Ovary (tissue), 10 donors: ENCODE measurements at regions of chr9 and their contacts with region 1.

Region 1: DNA sequence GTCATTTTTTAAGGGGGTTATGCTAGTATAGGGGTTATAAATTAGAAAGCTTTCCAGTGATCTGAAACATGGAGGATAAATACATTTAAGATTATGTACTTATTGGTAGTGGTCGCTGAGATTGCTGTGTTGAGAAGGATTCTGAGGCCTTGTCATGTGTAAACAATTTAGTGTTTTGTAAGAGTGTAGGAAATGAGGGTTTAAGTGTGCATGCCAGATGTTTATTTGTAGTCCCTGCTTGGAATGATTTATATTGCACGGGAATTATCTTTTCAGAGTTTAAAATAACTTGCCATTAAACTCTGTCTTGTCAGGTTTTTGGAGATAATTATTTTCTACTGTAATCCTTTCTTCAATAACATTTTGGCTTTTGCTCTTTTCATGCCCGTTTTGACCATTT is 19.4 kb downstream of the ZNF618 start:
- DNase-seq: no peak
- H3K4me3 ChIP-seq: no peak overlapping the region
- H3K27ac ChIP-seq: no peak overlapping the region
- H3K4me1 ChIP-seq: no peaks in the 10 kb centered on the region
- H3K27me3 ChIP-seq: no peaks in the 10 kb centered on the region
- CTCF ChIP-seq: no peak
- EP300 ChIP-seq: no peak
- POLR2A ChIP-seq: no peak

Region 2: DNA sequence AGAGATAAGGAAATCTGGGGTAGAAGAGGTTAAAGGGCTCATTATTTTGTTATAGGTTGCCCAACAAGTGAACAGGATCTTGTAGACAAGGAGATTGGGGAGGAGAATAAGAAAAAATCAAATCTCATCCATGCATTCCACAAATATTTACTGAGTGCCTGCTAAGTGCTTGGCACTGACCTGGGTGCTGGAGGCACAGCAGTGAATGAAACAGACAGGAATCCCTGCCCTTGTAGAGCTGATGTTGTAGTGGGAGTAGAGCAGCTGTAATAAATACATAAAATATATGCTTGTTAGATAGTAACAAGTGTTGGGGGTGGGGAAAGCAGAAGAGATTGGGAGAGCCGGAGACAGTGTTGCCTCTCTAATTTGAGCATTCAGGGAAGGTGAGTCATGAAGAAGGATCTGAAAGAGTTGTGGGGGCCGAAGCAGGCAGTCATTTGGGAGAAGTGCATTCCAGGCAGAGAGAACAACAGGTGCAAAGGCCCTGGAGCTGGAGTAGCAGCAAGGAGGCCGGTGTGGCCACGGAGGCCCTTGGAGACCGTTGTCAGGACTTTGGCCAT is 78.4 kb after region 1 on chr9:
- intact Hi-C with region 1: loop called in 1 of 4 experiments (anchors 10 kb)
- DNase-seq: no peak
- H3K4me3 ChIP-seq: no peak overlapping the region
- H3K27ac ChIP-seq: no peak overlapping the region
- H3K4me1 ChIP-seq: peaks cover 15% of the 10 kb centered on the region
- H3K27me3 ChIP-seq: no peaks in the 10 kb centered on the region
- CTCF ChIP-seq: no peak
- EP300 ChIP-seq: no peak
- POLR2A ChIP-seq: no peak

Region 3: DNA sequence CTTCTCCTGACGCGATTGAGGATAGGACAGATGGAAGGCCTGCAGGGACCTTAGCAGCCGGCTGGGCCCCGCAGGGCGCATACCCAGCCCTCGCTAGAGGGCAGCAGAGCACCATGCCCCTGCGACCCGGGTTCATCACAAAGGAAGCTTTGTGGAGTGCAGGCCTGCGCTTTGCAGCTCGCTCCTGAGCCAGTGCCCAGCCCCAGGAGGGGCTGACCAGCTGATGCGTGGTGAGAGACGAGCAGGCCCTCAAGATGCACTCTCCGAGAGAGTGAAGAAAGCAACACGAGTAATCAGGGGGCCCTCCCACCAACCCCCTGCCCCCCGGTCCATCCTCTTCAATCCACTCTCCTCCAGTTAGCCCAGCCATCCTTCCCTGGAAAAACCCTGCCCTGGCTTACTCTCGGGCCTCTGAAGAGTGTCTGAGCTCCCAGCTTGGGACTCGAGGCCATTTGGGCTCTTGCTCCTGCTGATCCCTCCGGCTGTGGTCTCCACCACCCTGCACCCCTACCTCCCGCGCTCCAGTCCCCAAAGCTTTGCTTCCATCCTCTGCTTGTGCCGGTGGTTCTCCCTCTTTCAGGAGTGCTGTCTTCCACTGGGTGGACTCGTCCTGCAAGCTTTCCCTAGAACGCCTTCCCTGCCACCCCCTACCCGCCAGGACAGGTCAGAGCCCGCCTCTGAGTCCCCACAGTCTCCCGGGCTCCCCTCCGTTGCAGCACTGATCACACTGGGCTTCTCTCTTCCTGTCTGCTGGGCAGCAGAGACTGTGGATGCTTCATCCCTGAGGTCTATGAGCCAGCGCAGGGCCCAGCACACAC is 212.7 kb after region 1 on chr9:
- intact Hi-C with region 1: no loop called
- DNase-seq: peak; percentile 55 to 87 (median 73)
- H3K4me3 ChIP-seq: no peak overlapping the region
- H3K27ac ChIP-seq: no peak overlapping the region
- H3K4me1 ChIP-seq: no peaks in the 10 kb centered on the region
- H3K27me3 ChIP-seq: no peaks in the 10 kb centered on the region
- CTCF ChIP-seq: peak; percentile 43 to 62 (median 54)
- EP300 ChIP-seq: no peak
- POLR2A ChIP-seq: no peak